ENCODE measurements at regions of chr2 and their contacts with region 1.

Region 1: DNA sequence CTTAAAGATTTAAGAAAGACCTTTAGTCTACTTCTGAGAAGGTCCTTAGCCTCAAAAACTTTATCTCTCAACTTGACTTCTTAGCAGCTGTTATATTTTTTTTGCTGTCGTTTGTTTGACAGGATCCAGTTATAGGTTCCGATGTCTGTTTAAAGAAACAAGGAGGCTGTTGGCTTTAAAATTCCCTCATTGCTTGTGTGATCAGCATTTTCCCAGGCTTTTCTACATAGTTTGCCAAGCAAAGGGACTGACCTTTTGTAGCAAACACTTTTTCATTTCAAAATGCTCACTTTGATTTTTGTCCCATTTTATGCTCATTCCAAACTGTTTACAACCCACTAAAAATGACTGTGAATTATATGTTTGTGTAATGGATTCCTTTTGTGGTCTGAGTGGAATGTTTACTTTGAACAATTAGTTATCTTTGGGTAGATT is 394.9 kb downstream of the ARHGAP15 start:
- DNase-seq: no peak
- H3K4me3 ChIP-seq: no peak overlapping the region
- H3K4me3 Mint-ChIP-seq: peak overlapping the region in 3 of 8 donors; percentile 37 to 69 (median 53)
- H3K27ac ChIP-seq: no peak overlapping the region
- H3K27ac Mint-ChIP-seq: peak overlapping the region in 1 of 7 donors; percentile 48
- H3K4me1 ChIP-seq: peaks cover 46% of the 10 kb centered on the region
- H3K4me1 Mint-ChIP-seq: peaks cover 49 to 89% (median 73%) of the 10 kb centered on the region in 4 donors
- H3K27me3 ChIP-seq: no peaks in the 10 kb centered on the region
- H3K27me3 Mint-ChIP-seq: no peaks in the 10 kb centered on the region

Region 2: DNA sequence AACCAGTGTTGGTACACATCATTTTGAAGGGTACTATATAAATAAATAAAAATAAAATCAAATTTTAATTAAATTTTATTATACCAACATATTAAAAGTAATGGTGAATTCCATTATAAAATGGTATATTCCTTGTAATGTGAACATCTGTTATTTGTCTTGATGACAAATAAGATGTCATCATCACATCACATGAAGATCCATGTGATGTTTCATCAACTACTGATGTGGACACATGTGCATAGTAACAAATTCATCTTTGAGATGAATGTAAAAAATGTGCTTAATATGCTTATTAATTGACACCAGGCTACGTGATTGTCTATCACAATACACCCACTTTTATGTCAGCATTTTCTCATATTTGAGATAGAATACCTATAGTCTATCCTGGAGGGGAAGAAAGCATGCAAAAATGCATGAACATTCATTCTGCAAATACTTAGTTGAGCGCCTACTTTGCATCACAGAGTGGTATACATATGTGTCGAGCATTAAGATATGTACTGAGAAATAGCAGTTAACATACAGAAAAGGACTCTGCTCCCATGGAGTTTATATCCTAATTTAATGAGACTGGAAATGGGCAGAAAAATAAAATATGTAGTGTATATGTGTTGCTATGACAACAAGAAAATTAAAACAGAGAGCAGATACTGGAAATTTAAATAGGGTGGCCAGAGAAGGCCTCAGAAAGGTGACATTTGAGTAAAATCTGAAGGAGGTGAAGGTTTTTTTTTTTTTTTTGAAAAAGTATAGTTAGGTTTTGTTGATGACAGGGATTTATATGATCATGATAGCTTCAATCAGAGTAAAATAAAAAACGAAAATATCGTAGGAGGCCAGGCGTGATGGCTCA is 113.8 kb before region 1 on chr2:
- CTCF ChIA-PET with region 1: no interaction called
- POLR2A ChIA-PET with region 1: no interaction called
- intact Hi-C with region 1: no loop called
- DNase-seq: no peak
- H3K4me3 ChIP-seq: no peak overlapping the region
- H3K4me3 Mint-ChIP-seq: peak overlapping the region in 1 of 8 donors; percentile 13
- H3K27ac ChIP-seq: no peak overlapping the region
- H3K27ac Mint-ChIP-seq: peak overlapping the region in 4 of 7 donors; percentile 19 to 53 (median 40)
- H3K4me1 ChIP-seq: peaks cover 11% of the 10 kb centered on the region
- H3K4me1 Mint-ChIP-seq: peaks cover 27 to 62% (median 50%) of the 10 kb centered on the region in 4 donors
- H3K27me3 ChIP-seq: no peaks in the 10 kb centered on the region
- H3K27me3 Mint-ChIP-seq: no peaks in the 10 kb centered on the region

Region 3: GRCh38 chr2:143489145-143489544 is 35.0 kb before region 1 on chr2:
- CTCF ChIA-PET with region 1: no interaction called
- POLR2A ChIA-PET with region 1: no interaction called
- intact Hi-C with region 1: loop called (anchors 5 kb)
- DNase-seq: no peak
- H3K4me3 ChIP-seq: no peak overlapping the region
- H3K4me3 Mint-ChIP-seq: no peak overlapping the region
- H3K27ac ChIP-seq: no peak overlapping the region
- H3K27ac Mint-ChIP-seq: no peak overlapping the region
- H3K4me1 ChIP-seq: peaks cover 11% of the 10 kb centered on the region
- H3K4me1 Mint-ChIP-seq: peaks cover 26 to 58% (median 40%) of the 10 kb centered on the region in 4 donors
- H3K27me3 ChIP-seq: no peaks in the 10 kb centered on the region
- H3K27me3 Mint-ChIP-seq: no peaks in the 10 kb centered on the region

Region 4: GRCh38 chr2:143505542-143505941 is 18.6 kb before region 1 on chr2:
- CTCF ChIA-PET with region 1: no interaction called
- POLR2A ChIA-PET with region 1: no interaction called
- intact Hi-C with region 1: loop called (anchors 2 kb)
- DNase-seq: no peak
- H3K4me3 ChIP-seq: no peak overlapping the region
- H3K4me3 Mint-ChIP-seq: no peak overlapping the region
- H3K27ac ChIP-seq: no peak overlapping the region
- H3K27ac Mint-ChIP-seq: no peak overlapping the region
- H3K4me1 ChIP-seq: no peaks in the 10 kb centered on the region
- H3K4me1 Mint-ChIP-seq: peaks cover 32 to 58% (median 40%) of the 10 kb centered on the region in 4 donors
- H3K27me3 ChIP-seq: no peaks in the 10 kb centered on the region
- H3K27me3 Mint-ChIP-seq: no peaks in the 10 kb centered on the region

Measured in CD4-positive, alpha-beta memory T cell (primary cell).